ENCODE measurements at regions of chr5 and their contacts with region 1.

Region 1: GRCh38 chr5:124980163-124980941 is 233.9 kb upstream of the ZNF608 start:
- DNase-seq: peak; percentile 72
- ATAC-seq: peak; percentile 93
- H3K4me3 ChIP-seq: peak overlapping the region in 1 of 5 experiments; percentile 26
- H3K4me3 Mint-ChIP-seq: peak overlapping the region; percentile 64
- H3K27ac ChIP-seq: peak overlapping the region in 1 of 2 donors; percentile 43
- H3K27ac Mint-ChIP-seq: peak overlapping the region; percentile 15
- H3K4me1 ChIP-seq: peaks cover 49 to 52% of the 10 kb centered on the region in 2 donors
- H3K4me1 Mint-ChIP-seq: peaks cover 56% of the 10 kb centered on the region
- H3K27me3 ChIP-seq: no peaks in the 10 kb centered on the region
- H3K27me3 Mint-ChIP-seq: no peaks in the 10 kb centered on the region
- CTCF ChIP-seq: no peak

Region 2: DNA sequence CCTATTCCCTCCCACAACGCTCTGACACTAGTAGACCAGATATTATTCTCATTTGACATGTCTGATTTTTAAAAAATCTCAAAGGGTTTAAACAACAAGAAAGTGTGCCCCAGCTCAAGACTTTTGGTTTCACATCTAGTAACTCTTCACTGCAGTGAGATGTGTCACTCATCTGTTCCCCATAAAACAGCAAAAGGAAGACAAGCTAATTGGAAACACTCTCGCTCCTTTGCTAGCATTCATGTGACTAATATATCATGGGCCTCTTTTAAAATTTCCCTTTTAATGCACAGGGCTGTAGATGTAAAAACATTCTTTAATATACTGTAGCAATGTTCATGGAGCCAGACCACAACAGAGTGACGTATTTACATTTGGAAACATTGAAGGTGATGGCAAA is 606.5 kb before region 1 on chr5:
- CTCF ChIA-PET with region 1: no interaction called
- POLR2A ChIA-PET with region 1: no interaction called
- intact Hi-C with region 1: no loop called
- DNase-seq: no peak
- ATAC-seq: no peak
- H3K4me3 ChIP-seq: no peak overlapping the region
- H3K4me3 Mint-ChIP-seq: no peak overlapping the region
- H3K27ac ChIP-seq: no peak overlapping the region
- H3K27ac Mint-ChIP-seq: no peak overlapping the region
- H3K4me1 ChIP-seq: no peaks in the 10 kb centered on the region
- H3K4me1 Mint-ChIP-seq: no peaks in the 10 kb centered on the region
- H3K27me3 ChIP-seq: no peaks in the 10 kb centered on the region
- H3K27me3 Mint-ChIP-seq: no peaks in the 10 kb centered on the region
- CTCF ChIP-seq: no peak

Region 3: DNA sequence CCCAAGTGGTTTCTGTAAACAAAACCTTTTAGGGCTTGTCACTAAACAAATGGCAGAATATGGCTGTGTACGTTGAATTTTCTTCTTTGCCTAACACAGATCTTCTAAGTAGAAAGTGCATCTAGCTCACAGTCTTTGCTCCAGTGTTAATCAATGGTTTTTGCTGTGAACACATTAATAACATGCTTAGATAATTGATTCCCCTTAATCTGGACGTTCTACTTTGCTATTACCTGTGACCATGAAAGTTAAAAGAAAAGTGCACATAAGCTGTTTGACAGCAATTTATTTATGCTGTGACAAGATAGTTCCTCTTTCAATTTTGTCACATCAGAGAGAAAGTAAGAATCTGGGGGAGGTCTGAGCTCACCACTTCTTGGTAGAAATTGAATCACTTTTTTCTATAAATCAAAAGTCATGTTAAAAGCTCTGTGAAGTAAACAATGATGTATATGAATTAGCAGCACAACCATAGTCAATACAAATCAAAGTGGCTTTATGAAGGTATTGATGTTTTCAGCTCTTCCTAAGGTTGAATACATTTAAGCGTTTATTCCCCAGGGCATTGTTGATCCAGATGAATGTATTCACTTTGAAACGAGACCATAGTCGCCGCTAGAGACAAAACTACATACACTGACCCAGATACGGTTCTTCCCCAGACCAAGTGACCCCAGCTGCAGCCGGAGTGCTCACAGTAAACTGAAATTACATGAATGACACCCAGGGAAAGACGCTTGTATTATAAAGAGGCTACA is 59.3 kb before region 1 on chr5:
- CTCF ChIA-PET with region 1: no interaction called
- POLR2A ChIA-PET with region 1: interaction called, 3 read pairs
- intact Hi-C with region 1: loop called (anchors 5 kb)
- DNase-seq: peak; percentile 77
- ATAC-seq: peak; percentile 80
- H3K4me3 ChIP-seq: peak overlapping the region; percentile 2 to 61 (median 36)
- H3K4me3 Mint-ChIP-seq: no peak overlapping the region
- H3K27ac ChIP-seq: peak overlapping the region; percentile 54 to 71
- H3K27ac Mint-ChIP-seq: no peak overlapping the region
- H3K4me1 ChIP-seq: peaks cover 29 to 30% of the 10 kb centered on the region in 2 donors
- H3K4me1 Mint-ChIP-seq: peaks cover 27% of the 10 kb centered on the region
- H3K27me3 ChIP-seq: no peaks in the 10 kb centered on the region
- H3K27me3 Mint-ChIP-seq: no peaks in the 10 kb centered on the region
- CTCF ChIP-seq: no peak

Region 4: GRCh38 chr5:124935065-124935464 is 45.3 kb before region 1 on chr5:
- CTCF ChIA-PET with region 1: no interaction called
- POLR2A ChIA-PET with region 1: no interaction called
- intact Hi-C with region 1: no loop called
- DNase-seq: peak; percentile 81
- ATAC-seq: peak; percentile 69
- H3K4me3 ChIP-seq: no peak overlapping the region
- H3K4me3 Mint-ChIP-seq: peak overlapping the region; percentile 17
- H3K27ac ChIP-seq: peak overlapping the region; percentile 45 to 65
- H3K27ac Mint-ChIP-seq: peak overlapping the region; percentile 84
- H3K4me1 ChIP-seq: peaks cover 15 to 19% of the 10 kb centered on the region in 2 donors
- H3K4me1 Mint-ChIP-seq: peaks cover 17% of the 10 kb centered on the region
- H3K27me3 ChIP-seq: no peaks in the 10 kb centered on the region
- H3K27me3 Mint-ChIP-seq: no peaks in the 10 kb centered on the region
- CTCF ChIP-seq: no peak

Region 5: DNA sequence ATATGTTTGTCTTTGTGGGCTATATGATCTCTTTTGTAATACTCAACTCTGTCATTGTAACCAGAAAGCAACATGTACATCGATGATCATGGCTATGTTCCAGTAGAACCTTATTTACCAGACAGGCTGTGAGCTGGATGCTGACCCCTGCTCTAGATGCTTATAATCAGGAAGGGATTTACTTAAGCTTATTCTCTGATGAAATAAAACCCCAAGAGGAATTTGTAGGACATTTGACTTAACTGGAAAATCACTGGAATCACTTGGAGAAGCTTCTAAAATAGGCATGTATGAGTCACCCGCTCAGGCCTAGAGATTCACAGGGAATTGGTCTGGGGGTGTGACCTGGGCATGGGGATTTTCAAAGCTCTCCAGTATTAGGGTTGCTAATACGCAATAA is 51.9 kb after region 1 on chr5:
- CTCF ChIA-PET with region 1: no interaction called
- POLR2A ChIA-PET with region 1: no interaction called
- intact Hi-C with region 1: loop called (anchors 10 kb)
- DNase-seq: no peak
- ATAC-seq: no peak
- H3K4me3 ChIP-seq: no peak overlapping the region
- H3K4me3 Mint-ChIP-seq: no peak overlapping the region
- H3K27ac ChIP-seq: no peak overlapping the region
- H3K27ac Mint-ChIP-seq: no peak overlapping the region
- H3K4me1 ChIP-seq: peaks cover 7 to 9% of the 10 kb centered on the region in 2 donors
- H3K4me1 Mint-ChIP-seq: peaks cover 9% of the 10 kb centered on the region
- H3K27me3 ChIP-seq: no peaks in the 10 kb centered on the region
- H3K27me3 Mint-ChIP-seq: no peaks in the 10 kb centered on the region
- CTCF ChIP-seq: no peak

Measured in B cell (primary cell).